ENCODE measurements at regions of chrX and their contacts with region 1.

Region 1: GRCh38 chrX:86002076-86002896 is 45.1 kb downstream of the CHM start:
- DNase-seq: peak; percentile 76 to 77
- H3K4me3 ChIP-seq: peak overlapping the region; percentile 4; the same call in 1 of the 2 replicates
- H3K4me3 Mint-ChIP-seq: peak overlapping the region; percentile 63
- H3K27ac Mint-ChIP-seq: peak overlapping the region; percentile 45
- H3K4me1 ChIP-seq: no peaks in the 10 kb centered on the region
- H3K4me1 Mint-ChIP-seq: peaks cover 7% of the 10 kb centered on the region
- H3K27me3 ChIP-seq: no peaks in the 10 kb centered on the region
- H3K27me3 Mint-ChIP-seq: no peaks in the 10 kb centered on the region
- CTCF ChIP-seq: no peak

Region 2: GRCh38 chrX:85977218-85977617 is 25.1 kb before region 1 on chrX:
- CTCF ChIA-PET with region 1: interaction called, 14 read pairs
- POLR2A ChIA-PET with region 1: no interaction called
- intact Hi-C with region 1: no loop called
- DNase-seq: no peak
- H3K4me3 ChIP-seq: no peak overlapping the region
- H3K4me3 Mint-ChIP-seq: no peak overlapping the region
- H3K27ac Mint-ChIP-seq: no peak overlapping the region
- H3K4me1 ChIP-seq: no peaks in the 10 kb centered on the region
- H3K4me1 Mint-ChIP-seq: no peaks in the 10 kb centered on the region
- H3K27me3 ChIP-seq: no peaks in the 10 kb centered on the region
- H3K27me3 Mint-ChIP-seq: no peaks in the 10 kb centered on the region
- CTCF ChIP-seq: no peak

Region 3: GRCh38 chrX:86047174-86047935 is 45.1 kb after region 1 on chrX and contains the start of gene CHM:
- CTCF ChIA-PET with region 1: no interaction called
- POLR2A ChIA-PET with region 1: no interaction called
- intact Hi-C with region 1: loop called (anchors 2 kb)
- DNase-seq: peak; percentile 61 to 66
- H3K4me3 ChIP-seq: peak within 1 kb of the TSS; percentile 55
- H3K4me3 Mint-ChIP-seq: no peak within 1 kb of the TSS
- H3K27ac Mint-ChIP-seq: no peak within 1 kb of the TSS
- H3K4me1 ChIP-seq: no peaks in the 10 kb centered on the region
- H3K4me1 Mint-ChIP-seq: no peaks in the 10 kb centered on the region
- H3K27me3 ChIP-seq: no peaks in the 10 kb centered on the region
- H3K27me3 Mint-ChIP-seq: no peaks in the 10 kb centered on the region
- CTCF ChIP-seq: no peak
- total RNA-seq, gene CHM: 16.9 and 24.0 TPM in 2 replicates

Measured in Caco-2 (cell line).